AG04449 (cell line): ENCODE measurements at regions of chr11 and their contacts with region 1.

Region 1: GRCh38 chr11:62337303-62338181 is at the start of gene ASRGL1:
- DNase-seq: no peak
- H3K4me3 ChIP-seq: peak within 1 kb of the TSS; percentile 63
- CTCF ChIP-seq: no peak

Region 2: GRCh38 chr11:62353844-62354243 is 16.3 kb after region 1 on chr11:
- CTCF ChIA-PET with region 1: interaction called, 23 read pairs
- POLR2A ChIA-PET with region 1: no interaction called
- DNase-seq: no peak
- H3K4me3 ChIP-seq: no peak overlapping the region
- CTCF ChIP-seq: no peak

Region 3: GRCh38 chr11:62372871-62373270 is 35.3 kb after region 1 on chr11:
- CTCF ChIA-PET with region 1: interaction called, 58 read pairs
- POLR2A ChIA-PET with region 1: no interaction called
- DNase-seq: no peak
- H3K4me3 ChIP-seq: no peak overlapping the region
- CTCF ChIP-seq: no peak

Region 4: GRCh38 chr11:62383822-62384221 is 46.3 kb after region 1 on chr11:
- CTCF ChIA-PET with region 1: interaction called, 12 read pairs
- POLR2A ChIA-PET with region 1: no interaction called
- DNase-seq: no peak
- H3K4me3 ChIP-seq: no peak overlapping the region
- CTCF ChIP-seq: no peak

Region 5: DNA sequence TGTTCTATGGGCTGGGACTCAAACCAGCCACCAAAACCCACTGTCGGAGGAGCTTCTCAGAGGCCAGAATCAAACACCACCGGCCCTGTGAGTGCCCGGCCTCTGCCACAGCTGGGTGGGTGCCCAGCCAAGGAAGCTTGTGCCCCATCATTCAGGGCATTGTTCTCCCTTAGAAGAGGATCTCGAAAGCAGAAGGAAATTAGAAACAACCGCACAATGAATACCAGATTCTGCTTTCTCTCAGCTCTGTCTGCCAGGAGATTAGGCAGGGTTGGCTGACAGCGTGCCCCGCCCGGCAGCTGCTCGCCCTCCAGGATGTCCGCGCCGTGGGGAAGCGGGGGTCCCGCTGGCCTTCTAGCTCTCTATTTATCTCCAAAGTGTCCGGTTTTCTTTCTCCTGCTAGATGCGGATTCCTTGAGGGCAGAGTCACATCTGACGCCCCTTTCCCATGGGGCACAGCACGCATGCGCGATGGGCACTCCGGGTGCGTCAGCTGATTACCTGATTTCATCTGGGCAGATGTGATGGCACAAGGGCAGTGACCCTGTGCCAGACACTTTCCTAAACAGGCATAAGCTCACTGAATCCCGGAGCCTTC is 106.8 kb after region 1 on chr11:
- CTCF ChIA-PET with region 1: no interaction called
- POLR2A ChIA-PET with region 1: no interaction called
- DNase-seq: no peak
- H3K4me3 ChIP-seq: peak overlapping the region; percentile 47
- CTCF ChIP-seq: no peak